ENCODE measurements at regions of chr3 and their contacts with region 1.

Region 1: DNA sequence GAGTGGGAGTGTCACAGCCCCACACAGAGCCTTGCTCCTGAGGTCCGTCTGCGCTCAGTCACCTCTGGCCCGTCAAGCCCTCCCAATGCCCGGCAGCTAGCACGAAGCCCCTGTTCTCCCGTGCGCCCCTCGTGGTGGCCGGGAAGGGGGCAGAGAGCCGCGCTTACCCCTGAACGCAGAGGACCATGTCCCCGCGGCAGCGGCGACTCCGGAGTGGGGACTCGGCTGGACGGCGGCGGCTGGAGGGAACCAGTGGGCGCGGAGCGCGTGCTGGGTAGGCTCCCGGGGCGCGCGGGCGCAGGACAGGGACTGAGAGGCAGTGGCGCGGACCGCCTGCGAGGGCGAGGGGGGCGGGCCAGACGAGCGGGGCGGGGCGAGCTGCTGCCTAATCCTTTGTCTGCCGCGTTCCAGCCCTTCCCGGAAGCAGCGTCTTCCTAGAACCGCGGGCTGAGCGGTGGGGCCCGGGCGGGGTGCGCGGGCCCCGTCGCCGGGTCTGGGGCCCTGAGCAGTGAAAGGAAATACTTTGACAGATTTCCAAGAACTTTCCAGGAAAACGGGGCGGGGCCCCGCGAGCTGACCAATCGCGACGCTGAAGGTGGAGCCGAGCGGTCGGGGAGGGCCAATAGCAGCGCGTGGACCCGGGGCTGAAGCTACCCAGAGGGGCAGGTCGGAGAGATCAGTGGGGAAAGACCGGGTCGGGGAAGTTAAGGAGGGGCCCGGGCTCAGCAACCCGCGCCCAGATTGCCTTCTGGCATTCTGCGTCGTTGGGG is at the start of gene CISH:
- DNase-seq: peak; percentile 92
- ATAC-seq: peak; percentile 77
- H3K4me3 Mint-ChIP-seq: peak within 1 kb of the TSS; percentile 87
- H3K27ac Mint-ChIP-seq: peak within 1 kb of the TSS; percentile 77
- H3K4me1 Mint-ChIP-seq: peaks cover 38% of the 10 kb centered on the region
- H3K27me3 Mint-ChIP-seq: no peaks in the 10 kb centered on the region
- CTCF ChIP-seq: no peak
- total RNA-seq, gene CISH: 2.9 and 3.2 TPM in 2 replicates

Region 2: GRCh38 chr3:50474717-50475116 is 136.9 kb before region 1 on chr3:
- CTCF ChIA-PET with region 1: no interaction called
- POLR2A ChIA-PET with region 1: no interaction called
- intact Hi-C with region 1: no loop called
- DNase-seq: no peak
- ATAC-seq: no peak
- H3K4me3 Mint-ChIP-seq: no peak overlapping the region
- H3K27ac Mint-ChIP-seq: no peak overlapping the region
- H3K4me1 Mint-ChIP-seq: no peaks in the 10 kb centered on the region
- H3K27me3 Mint-ChIP-seq: peaks cover 2% of the 10 kb centered on the region
- CTCF ChIP-seq: no peak

Region 3: DNA sequence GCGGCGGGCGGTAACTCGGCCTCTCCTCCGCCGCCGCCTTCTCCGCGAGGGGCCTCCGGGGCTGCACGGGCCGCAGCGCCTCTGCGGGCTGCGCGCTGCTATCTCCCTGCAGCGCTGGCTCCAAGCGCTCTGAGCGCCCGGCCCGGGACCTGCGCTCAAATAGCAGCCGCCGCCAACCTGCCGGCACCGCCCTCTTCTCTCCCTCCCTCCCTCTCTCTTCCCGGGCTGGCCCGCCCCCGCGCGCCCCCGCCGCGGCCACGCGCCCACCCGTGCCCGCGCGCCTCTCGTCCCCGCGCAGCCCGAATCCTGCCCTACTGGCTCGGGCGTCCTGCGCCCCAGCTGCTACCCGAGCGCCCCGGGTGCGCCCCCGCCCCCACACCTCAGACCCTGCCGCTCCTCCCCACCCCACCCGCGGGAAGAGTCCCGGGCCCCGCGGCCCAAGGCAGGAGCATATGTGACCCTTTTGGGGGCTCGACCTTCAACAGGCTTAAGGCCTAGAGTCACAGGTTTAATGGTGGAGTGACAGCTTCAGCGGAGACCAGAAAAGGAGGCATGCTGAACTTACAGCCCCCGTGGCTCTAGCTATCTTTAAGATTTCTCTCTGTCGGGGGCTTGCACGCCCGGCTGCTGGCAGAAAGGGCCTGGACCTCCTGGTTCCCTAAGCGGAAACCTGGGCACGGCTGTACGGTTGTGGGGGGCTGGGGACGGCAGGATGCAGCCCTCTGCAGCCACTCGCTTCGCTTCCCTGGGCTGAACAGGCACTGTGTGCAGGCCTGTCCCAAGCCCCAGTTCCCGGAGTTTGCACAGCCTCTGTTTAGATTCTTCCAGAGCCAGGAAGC is 107.9 kb before region 1 on chr3 and contains the start of gene CACNA2D2:
- CTCF ChIA-PET with region 1: no interaction called
- POLR2A ChIA-PET with region 1: no interaction called
- intact Hi-C with region 1: loop called (anchors 5 kb)
- DNase-seq: peak; percentile 57
- ATAC-seq: peak; percentile 87
- H3K4me3 Mint-ChIP-seq: peak within 1 kb of the TSS; percentile 69
- H3K27ac Mint-ChIP-seq: no peak within 1 kb of the TSS
- H3K4me1 Mint-ChIP-seq: peaks cover 10% of the 10 kb centered on the region
- H3K27me3 Mint-ChIP-seq: peaks cover 29% of the 10 kb centered on the region
- CTCF ChIP-seq: no peak
- total RNA-seq, gene CACNA2D2: 0.34 and 0.53 TPM in 2 replicates

Region 4: GRCh38 chr3:50600841-50601591 is 10.6 kb before region 1 on chr3:
- CTCF ChIA-PET with region 1: interaction called, 4 read pairs
- POLR2A ChIA-PET with region 1: interaction called, 8 read pairs
- intact Hi-C with region 1: loop called (anchors 1 kb)
- DNase-seq: no peak
- ATAC-seq: peak; percentile 61
- H3K4me3 Mint-ChIP-seq: peak overlapping the region; percentile 41
- H3K27ac Mint-ChIP-seq: peak overlapping the region; percentile 41
- H3K4me1 Mint-ChIP-seq: peaks cover 40% of the 10 kb centered on the region
- H3K27me3 Mint-ChIP-seq: no peaks in the 10 kb centered on the region
- CTCF ChIP-seq: no peak

Region 5: GRCh38 chr3:51311055-51311454 is 699.4 kb after region 1 on chr3:
- CTCF ChIA-PET with region 1: interaction called, 23 read pairs
- POLR2A ChIA-PET with region 1: no interaction called
- intact Hi-C with region 1: loop called (anchors 1 kb)
- DNase-seq: no peak
- ATAC-seq: no peak
- H3K4me3 Mint-ChIP-seq: no peak overlapping the region
- H3K27ac Mint-ChIP-seq: no peak overlapping the region
- H3K4me1 Mint-ChIP-seq: no peaks in the 10 kb centered on the region
- H3K27me3 Mint-ChIP-seq: peaks cover 10% of the 10 kb centered on the region
- CTCF ChIP-seq: no peak

Region 6: DNA sequence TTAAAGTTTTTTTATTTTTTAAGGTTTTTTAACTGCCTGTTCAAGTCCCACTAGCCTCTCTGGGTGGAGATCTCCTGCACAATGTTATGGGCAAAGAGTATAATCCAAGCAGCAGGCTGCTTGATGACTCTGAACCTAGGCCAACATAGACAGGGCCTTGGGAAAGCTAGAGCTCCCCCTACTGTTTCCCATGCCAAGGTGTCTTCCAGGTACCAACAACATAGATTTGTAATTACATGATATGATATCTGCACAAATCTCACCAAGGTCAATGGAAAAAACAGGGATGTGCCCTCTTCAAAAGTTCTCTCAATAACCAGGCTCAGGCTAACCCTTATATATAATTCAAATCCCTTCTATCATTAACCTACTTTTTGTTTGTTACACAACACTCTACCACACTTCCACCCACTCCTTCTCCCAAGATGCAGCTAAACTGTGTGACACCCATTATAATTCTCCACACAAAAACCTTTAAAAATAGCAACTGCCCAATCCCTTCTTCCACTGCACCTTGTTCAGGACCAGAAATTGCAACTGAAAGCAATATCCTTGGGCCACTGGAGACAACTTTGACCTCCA is 823.2 kb after region 1 on chr3:
- CTCF ChIA-PET with region 1: interaction called, 16 read pairs
- POLR2A ChIA-PET with region 1: no interaction called
- intact Hi-C with region 1: loop called (anchors 1 kb)
- DNase-seq: no peak
- ATAC-seq: peak; percentile 66
- H3K4me3 Mint-ChIP-seq: no peak overlapping the region
- H3K27ac Mint-ChIP-seq: no peak overlapping the region
- H3K4me1 Mint-ChIP-seq: no peaks in the 10 kb centered on the region
- H3K27me3 Mint-ChIP-seq: no peaks in the 10 kb centered on the region
- CTCF ChIP-seq: no peak

Region 7: GRCh38 chr3:51682079-51682478 is 1070.4 kb after region 1 on chr3:
- CTCF ChIA-PET with region 1: interaction called, 3 read pairs
- POLR2A ChIA-PET with region 1: no interaction called
- intact Hi-C with region 1: loop called (anchors 2 kb)
- DNase-seq: peak; percentile 40
- ATAC-seq: peak; percentile 87
- H3K4me3 Mint-ChIP-seq: peak overlapping the region; percentile 12
- H3K27ac Mint-ChIP-seq: peak overlapping the region; percentile 73
- H3K4me1 Mint-ChIP-seq: peaks cover 82% of the 10 kb centered on the region
- H3K27me3 Mint-ChIP-seq: no peaks in the 10 kb centered on the region
- CTCF ChIP-seq: no peak